ENCODE measurements at regions of chr6 and their contacts with region 1.

Region 1: DNA sequence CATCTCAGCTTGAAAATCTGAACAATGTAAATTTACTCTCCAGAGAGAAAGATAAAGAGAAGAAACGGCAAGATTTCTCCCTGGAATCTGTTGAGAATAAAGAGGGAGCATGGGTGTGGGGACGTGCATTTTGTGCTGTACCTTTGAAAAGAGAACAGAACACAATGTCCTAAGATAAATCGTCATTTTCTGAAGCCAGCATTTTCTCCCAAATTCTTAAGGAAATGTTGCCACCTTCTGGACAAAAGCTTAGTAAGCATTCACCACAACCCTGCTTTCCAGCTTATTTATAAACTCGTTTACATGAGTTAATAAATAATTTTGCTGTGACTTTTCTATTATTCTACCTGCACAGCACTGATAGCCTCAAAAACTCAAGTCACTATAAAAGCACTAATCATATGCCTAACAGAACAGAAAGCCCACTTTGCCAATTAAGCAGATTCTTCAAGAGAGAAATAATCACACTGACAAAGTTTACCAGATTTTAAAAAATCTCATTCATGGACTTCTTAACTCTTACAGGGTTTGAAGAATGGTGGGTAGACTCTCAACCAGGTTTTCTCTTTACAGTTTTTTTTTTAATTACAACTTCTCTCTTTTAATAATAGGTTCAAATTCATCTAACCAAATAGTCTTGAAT is 155.8 kb downstream of the MBOAT1 start:
- DNase-seq: peak in 2 of 4 donors; percentile 12 to 17
- ATAC-seq: peak; percentile 47
- H3K4me3 ChIP-seq: no peak overlapping the region
- H3K27ac ChIP-seq: no peak overlapping the region
- H3K4me1 ChIP-seq: no peaks in the 10 kb centered on the region
- H3K27me3 ChIP-seq: no peaks in the 10 kb centered on the region
- CTCF ChIP-seq: peak; percentile 23 to 78 (median 62)
- POLR2A ChIP-seq: no peak

Region 2: GRCh38 chr6:18601516-18602020 is 1454.9 kb before region 1 on chr6:
- intact Hi-C with region 1: loop called (anchors 10 kb)
- DNase-seq: no peak
- ATAC-seq: no peak
- H3K4me3 ChIP-seq: no peak overlapping the region
- H3K27ac ChIP-seq: no peak overlapping the region
- H3K4me1 ChIP-seq: no peaks in the 10 kb centered on the region
- H3K27me3 ChIP-seq: no peaks in the 10 kb centered on the region
- CTCF ChIP-seq: no peak
- POLR2A ChIP-seq: no peak

Region 3: GRCh38 chr6:19879663-19880062 is 176.8 kb before region 1 on chr6:
- intact Hi-C with region 1: no loop called
- DNase-seq: no peak
- ATAC-seq: no peak
- H3K4me3 ChIP-seq: no peak overlapping the region
- H3K27ac ChIP-seq: no peak overlapping the region
- H3K4me1 ChIP-seq: no peaks in the 10 kb centered on the region
- H3K27me3 ChIP-seq: no peaks in the 10 kb centered on the region
- CTCF ChIP-seq: no peak
- POLR2A ChIP-seq: no peak

Region 4: DNA sequence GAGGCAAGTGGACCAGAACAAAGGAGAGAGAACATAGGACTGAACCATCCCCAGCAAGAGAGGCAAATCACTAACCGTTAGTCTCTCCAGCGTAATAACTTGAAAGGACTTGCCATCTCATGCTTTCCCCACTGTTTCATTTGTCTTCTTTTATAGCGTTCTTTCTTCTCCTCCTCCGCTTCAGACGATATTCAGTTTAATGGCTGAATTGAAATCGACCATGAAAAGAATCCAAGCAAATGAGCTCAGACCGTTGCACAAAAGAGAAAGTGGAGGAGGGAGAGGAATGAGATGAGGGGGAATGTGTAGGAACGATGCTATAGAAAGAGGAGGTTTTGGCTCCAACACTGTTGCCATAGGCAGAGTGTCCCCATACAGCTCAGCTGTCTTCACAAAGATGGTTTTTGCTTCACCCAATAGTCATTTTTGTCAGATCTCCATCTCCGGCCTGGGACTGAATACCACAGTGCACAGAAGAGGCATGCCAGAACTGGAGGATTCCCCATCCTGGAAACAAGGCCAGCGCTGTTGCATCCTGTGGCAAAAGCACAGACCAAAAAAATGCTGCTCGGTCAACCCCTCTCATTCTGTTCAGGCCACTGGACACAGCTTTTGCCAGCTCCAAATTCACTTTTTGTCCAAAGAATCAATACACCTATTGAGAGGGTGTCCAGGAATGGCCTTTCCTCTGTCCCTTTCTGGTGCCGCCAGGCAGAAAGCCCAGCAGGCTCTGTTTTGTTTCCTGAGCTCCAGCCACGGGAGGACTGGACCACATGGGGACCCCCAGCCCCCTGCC is 43.2 kb before region 1 on chr6:
- intact Hi-C with region 1: no loop called
- DNase-seq: no peak
- ATAC-seq: no peak
- H3K4me3 ChIP-seq: no peak overlapping the region
- H3K27ac ChIP-seq: no peak overlapping the region
- H3K4me1 ChIP-seq: no peaks in the 10 kb centered on the region
- H3K27me3 ChIP-seq: no peaks in the 10 kb centered on the region
- CTCF ChIP-seq: no peak
- POLR2A ChIP-seq: no peak

Region 5: DNA sequence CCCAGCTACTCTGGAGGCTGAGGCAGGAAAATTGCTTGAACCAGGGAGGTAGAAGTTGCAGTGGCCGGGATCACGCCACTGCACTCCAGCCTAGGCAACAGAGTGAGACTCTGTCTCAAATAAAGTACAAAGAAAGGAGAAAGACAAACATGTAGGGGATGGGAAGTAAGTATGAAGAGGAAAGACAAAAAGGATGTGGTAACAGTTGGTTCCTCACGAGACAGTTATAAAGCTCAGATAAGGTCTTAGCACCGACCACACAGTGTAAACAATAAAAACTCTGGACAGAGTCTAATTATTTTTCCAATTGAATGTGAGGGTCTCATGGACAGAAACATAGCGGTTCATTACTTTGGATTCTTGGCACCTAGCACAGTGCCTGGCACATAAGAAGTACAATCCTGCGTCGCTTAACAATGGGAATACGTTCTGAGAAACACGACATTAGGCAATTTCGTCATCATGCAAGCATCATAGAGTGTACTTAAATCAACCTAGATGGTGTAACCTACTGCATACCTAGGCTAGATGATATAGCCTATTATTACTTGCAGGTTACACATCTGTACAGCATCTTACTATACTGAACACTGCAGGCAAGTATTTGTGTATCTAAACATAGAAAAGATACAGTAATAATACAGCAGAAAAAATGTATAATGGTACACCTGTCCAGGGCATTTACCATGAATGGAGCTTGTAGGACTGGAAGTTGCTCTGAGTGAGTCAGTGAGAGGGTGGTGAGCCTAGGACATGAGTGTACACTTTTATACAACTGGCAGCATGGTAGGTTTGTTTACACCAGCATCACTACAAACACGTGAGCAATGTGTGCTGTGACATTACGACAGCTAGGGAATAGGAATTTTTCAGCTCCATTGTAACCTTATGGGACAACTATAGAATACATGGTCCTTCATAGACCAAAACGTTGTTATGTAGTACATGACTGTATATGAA is 117.6 kb after region 1 on chr6:
- intact Hi-C with region 1: no loop called
- DNase-seq: no peak
- ATAC-seq: no peak
- H3K4me3 ChIP-seq: no peak overlapping the region
- H3K27ac ChIP-seq: no peak overlapping the region
- H3K4me1 ChIP-seq: no peaks in the 10 kb centered on the region
- H3K27me3 ChIP-seq: no peaks in the 10 kb centered on the region
- CTCF ChIP-seq: no peak
- POLR2A ChIP-seq: no peak

Measured in body of pancreas (tissue), 4 donors.